GM10248 (cell line): ENCODE measurements at regions of chr20 and their contacts with region 1.

Region 1: DNA sequence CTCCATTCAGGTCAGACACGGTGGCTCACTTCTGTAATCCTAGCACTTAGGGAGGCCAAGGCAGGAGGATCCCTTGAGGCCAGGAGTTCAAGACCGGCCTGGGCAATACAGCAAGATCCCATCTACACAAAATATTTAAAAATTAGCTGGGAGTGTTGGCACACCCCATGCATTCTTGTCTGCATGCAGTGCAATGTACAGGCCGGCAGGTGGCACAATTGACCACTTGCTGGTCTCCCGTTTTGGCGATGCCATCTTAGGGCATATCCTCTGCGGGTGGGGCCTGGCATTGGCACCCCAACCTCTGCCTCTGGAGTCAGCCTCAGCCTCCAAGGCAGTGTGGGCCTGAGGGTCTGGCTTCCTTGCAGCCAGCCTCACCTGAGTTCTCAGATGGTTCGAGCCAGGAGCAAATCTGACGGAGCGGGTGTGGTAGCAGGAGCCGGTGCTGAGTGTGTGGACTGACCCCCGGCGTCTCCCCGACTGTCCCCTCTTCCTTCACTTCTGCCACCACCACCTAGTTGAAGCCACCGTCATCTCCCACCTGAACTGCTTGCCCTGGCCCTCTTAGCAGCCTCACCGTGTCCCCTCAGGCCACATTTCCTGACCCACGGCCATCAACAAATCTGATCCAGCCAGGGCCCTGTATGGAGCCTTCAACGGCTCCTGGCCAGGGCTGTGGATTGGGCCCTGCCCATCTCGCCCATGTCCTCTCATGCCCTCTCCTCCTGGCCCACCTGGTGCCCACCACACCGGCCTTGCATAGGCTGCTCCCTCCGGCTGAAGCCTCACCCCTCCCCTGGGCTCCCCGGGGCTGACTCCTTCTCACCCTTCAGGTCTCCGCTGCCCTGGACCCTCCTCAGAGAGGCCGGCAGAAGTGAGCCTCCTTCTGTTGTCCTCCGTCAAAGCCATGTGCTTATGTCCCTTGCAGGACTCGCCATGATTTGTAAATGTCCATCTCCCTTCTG is 44.0 kb downstream of the EFCAB8 start:
- DNase-seq: peak; percentile 80
- CTCF ChIP-seq: peak; percentile 92

Region 2: DNA sequence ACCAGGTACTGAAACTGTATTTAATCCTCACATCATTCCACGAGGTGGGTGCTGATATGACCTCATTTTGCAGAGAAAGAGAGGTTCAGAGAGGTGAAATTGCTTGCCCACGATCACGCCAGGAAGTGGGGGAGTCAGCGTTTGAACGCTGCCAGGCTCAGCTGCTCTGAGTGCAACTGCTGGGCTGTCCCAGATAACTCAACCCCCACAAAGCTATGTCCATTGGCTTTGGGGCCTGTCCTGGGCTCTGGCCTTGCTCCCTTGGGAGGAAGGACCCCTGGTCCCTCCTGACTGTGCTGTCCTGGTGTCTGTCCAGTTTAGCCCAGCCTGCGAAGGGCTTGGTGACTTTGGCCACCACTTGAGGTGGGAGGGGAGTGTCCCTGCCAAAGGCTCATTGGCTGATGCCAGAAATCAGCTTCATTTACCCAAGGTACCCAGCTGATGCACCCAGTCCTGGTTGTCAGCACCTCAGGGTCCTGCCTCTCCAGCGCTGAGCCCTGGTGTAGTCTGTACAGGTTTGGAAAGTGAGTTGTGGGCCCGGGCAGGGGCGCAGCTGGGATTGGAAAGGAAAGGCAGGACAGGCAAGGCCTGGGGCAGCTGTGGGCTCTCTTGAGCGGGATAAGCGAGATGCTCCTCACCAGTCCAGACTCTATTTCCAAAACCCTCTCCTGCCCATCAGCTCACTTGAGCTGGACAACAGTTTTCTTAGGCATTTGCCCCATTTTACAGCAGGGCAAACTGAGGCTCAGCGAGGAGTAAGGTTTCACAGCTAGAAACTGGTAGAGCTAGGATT is 63.0 kb after region 1 on chr20:
- CTCF ChIA-PET with region 1: no interaction called
- POLR2A ChIA-PET with region 1: no interaction called
- DNase-seq: peak; percentile 9
- CTCF ChIP-seq: no peak

Region 3: DNA sequence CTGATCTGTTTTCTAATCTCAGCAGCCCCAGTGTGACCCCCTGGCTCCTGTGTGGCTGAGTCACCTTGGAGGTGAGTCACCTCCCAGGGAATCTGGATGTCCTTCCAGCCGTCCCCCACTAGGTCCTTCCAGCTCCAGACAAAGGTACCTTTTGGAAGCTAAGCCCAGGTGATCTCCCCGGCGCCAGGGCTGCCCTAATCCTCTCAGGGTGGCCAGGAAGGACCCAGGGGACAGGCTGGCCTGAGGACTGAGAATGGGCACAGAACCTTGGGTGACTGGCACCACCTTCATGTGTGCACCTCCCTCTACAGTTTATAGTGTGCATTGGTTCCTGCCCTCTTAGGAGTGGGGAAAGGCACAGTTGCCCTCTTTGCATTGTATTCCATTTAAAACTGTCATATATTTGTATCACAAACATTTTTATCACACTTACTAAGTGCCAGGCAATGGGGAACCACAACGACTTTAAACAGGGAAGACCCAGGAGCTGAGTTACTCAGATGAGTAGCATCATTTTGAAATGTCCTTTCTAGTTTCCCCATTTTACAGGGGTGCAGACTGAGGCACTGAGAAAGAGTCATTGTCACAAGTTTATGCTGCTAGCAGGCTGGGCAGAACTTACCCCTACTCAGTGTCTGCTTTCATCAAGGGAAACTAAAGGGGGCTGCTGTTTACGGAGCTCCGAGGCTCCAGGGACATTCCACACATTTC is 174.1 kb after region 1 on chr20:
- CTCF ChIA-PET with region 1: interaction called, 15 read pairs
- POLR2A ChIA-PET with region 1: no interaction called
- DNase-seq: no peak
- CTCF ChIP-seq: peak; percentile 4

Region 4: DNA sequence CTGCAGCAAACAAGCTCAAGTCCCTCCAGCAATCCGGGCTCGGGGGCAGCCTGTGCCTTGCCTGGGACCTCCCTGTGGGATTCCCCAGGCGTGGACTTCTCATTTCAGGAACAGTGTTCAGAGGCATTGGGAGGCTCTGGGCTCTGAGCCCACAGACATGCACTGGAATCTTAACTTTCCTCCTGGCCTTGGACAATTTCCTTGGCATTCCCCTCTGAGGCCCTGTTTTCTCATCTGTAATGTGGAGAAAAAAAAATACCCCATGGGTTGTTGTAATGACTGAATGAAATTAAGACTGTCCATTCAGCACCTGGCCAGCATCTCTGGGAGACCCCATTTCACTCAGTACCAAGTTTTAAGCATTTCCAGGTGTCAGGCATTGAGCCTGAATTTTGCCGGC is 194.3 kb after region 1 on chr20:
- CTCF ChIA-PET with region 1: interaction called, 30 read pairs
- POLR2A ChIA-PET with region 1: no interaction called
- DNase-seq: no peak
- CTCF ChIP-seq: no peak

Region 5: DNA sequence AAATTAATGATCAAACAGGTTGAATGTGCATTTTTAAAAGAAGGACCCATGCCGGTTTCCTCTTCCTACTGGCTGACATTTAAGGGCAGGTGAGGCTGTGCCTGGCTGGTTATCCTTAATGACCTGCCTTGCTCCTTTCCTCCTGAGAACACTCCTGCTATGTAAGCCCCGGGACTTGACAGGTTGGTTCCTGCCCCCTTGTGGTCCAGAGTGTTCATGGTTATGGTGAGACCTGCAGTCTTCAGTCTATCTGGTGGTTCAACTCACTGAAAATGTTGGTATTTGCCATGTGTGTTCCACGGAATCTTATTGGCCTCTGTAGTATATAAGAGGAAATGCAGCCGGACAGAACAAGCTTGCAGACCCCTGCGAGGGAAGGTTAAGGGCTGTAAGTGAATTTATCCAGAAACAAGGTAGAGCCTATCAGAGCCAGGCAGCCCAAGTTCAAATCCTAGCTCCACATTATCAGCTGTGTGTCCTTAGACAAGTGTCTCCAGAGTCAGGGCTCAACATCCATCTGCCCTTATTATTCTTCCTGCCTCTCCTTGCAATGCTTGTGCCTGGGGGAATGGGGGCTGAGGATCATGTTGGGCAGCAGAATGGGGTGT is 309.2 kb after region 1 on chr20:
- CTCF ChIA-PET with region 1: interaction called, 23 read pairs
- POLR2A ChIA-PET with region 1: no interaction called
- DNase-seq: peak; percentile 55
- CTCF ChIP-seq: peak; percentile 53